ENCODE measurements at regions of chr11 and their contacts with region 1.

Region 1: DNA sequence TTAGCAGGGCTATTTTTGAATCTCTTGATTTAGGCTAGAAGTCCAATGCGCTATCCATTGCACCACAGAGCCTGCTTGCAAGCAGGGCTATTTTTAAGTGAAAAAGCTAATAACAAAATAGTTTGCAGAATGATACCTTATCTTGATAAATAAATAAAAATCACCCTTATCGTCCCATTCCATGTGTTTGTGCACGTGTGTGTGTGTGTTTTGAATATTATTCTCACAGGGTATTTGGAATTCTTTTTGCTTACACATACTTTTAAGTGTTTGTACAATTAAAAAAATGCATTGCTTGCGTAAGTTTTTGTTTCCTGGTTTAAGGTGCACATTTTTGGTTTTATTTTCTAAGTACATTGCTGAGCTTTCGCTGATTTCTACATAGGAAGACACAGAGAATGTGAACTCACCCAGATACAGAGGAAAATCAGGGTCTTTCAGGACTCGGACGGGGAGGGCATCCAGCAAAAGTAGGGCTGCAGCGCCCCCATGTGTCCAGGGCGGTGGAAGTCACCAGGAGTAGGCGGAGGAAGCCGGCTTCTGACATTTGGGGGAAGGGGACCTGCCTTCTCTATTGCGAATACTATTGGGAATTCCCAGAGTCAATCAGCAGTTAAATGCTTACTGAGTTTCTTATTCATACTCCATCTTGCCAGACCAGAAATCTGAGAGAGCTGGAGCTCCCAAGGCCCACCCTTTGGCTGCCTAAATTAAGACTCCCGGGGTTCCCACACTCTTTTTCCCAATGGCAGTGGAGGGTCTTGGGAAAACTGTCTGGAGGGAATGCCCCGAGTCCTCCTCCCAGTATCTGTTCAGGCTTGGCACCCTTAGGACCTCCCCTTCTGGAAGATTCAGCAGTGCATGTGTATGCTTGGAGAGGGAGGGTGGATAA is 27.2 kb downstream of the SLC1A2 start:
- DNase-seq: peak; percentile 70 to 93 (median 82)
- ATAC-seq: peak; percentile 93
- H3K4me3 ChIP-seq: no peak overlapping the region
- H3K4me3 Mint-ChIP-seq: peak overlapping the region; percentile 13 to 78 (median 63)
- H3K27ac ChIP-seq: no peak overlapping the region
- H3K27ac Mint-ChIP-seq: peak overlapping the region in 6 of 9 donors; percentile 25 to 86 (median 59)
- H3K4me1 ChIP-seq: peaks cover 0 to 17% of the 10 kb centered on the region in 2 donors
- H3K4me1 Mint-ChIP-seq: peaks cover 8 to 35% (median 30%) of the 10 kb centered on the region in 7 donors
- H3K27me3 ChIP-seq: no peaks in the 10 kb centered on the region
- H3K27me3 Mint-ChIP-seq: peaks cover 0 to 19% (median 0%) of the 10 kb centered on the region in 5 donors

Region 2: DNA sequence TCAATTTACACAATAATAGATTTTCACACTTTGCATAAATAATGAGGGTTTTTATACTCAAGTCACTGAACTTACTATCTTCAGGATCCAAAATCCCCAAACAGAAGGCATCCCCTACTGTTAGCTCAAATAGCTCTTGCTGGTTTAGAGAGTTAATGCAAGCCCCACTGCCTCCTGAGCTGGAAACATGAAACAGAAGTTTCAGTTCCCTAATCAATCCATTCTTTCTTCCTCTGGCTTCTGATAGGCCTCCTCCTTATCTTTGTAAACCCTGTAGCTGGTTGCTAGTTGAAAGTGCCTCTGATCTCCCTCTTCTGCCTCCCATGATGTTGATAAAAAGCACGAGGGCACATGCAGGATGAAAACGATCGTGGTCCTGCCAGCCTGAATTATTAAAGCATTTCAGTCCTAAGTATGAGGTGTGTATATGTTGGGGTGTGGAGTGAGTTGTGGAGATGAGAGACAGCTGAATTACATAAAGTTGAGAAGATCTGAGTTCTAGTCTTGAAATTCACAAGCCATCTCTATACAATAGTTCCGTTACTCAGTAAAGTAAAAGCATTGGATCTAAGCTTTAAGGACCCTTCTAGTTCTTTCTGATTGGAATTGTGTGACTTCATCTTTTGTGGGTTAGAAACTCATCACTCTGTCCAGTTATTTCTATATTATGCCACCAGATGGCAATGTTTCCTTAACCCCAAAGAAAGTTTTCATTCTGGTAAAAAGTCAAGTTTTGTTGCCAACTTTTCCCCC is 806.3 kb before region 1 on chr11:
- CTCF ChIA-PET with region 1: interaction called, 35 read pairs
- POLR2A ChIA-PET with region 1: no interaction called
- intact Hi-C with region 1: loop called (anchors 1 kb)
- DNase-seq: peak in 6 of 9 donors; percentile 5 to 47 (median 40)
- ATAC-seq: peak; percentile 60
- H3K4me3 ChIP-seq: no peak overlapping the region
- H3K4me3 Mint-ChIP-seq: no peak overlapping the region
- H3K27ac ChIP-seq: no peak overlapping the region
- H3K27ac Mint-ChIP-seq: no peak overlapping the region
- H3K4me1 ChIP-seq: peaks cover 0 to 4% of the 10 kb centered on the region in 2 donors
- H3K4me1 Mint-ChIP-seq: peaks cover 0 to 5% (median 0%) of the 10 kb centered on the region in 7 donors
- H3K27me3 ChIP-seq: no peaks in the 10 kb centered on the region
- H3K27me3 Mint-ChIP-seq: peaks cover 0 to 33% (median 18%) of the 10 kb centered on the region in 5 donors

Region 3: GRCh38 chr11:34926101-34926830 is 465.9 kb before region 1 on chr11:
- CTCF ChIA-PET with region 1: interaction called, 99 read pairs
- POLR2A ChIA-PET with region 1: interaction called, 5 read pairs
- intact Hi-C with region 1: loop called (anchors 1 kb)
- DNase-seq: peak in 7 of 9 donors; percentile 18 to 61 (median 58)
- ATAC-seq: peak; percentile 80
- H3K4me3 ChIP-seq: no peak overlapping the region
- H3K4me3 Mint-ChIP-seq: no peak overlapping the region
- H3K27ac ChIP-seq: no peak overlapping the region
- H3K27ac Mint-ChIP-seq: peak overlapping the region in 1 of 9 donors; percentile 49
- H3K4me1 ChIP-seq: peaks cover 0 to 10% of the 10 kb centered on the region in 2 donors
- H3K4me1 Mint-ChIP-seq: peaks cover 10 to 54% (median 29%) of the 10 kb centered on the region in 7 donors
- H3K27me3 ChIP-seq: no peaks in the 10 kb centered on the region
- H3K27me3 Mint-ChIP-seq: no peaks in the 10 kb centered on the region

Region 4: DNA sequence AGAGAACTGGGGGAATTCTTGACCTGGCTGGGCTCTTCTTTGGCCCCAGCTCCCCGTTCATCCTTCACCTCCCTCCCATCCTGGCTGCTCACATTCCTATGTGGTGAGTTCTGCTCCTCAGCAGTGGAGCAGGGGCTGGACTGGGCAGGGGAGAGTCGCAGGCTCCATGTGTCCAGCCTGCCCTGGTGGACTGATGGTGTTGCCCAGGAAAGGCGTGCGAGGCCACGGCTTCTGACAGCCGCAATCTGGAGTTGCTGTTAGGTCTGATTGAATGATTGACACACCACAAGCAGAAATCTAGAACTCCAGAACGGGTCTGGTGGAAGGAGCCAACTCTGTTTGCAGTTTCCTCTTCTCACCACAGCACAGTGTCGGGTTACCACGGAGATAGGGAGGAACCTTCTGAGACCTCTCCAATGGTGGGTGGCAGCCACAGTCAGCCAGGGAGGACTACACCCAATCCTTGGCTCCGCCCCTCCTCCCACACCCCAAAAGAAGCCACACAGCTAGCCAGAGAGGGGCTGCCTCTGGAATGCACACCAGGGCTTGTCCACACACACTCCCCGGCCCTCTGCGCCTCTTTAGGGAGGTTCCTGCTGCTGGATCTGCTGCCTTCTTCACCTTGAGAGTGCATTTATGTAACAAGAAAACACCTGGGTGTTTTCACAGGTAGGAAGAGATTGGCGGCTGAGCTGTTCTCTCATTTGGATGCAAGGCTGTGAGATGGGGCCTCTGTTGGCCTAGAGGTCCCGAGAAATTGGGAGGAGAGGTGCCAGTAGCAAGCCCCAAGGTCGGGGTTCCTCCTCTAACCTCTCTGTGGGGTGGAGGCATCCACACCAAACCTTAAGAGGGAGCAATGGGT is 309.6 kb before region 1 on chr11:
- CTCF ChIA-PET with region 1: no interaction called
- POLR2A ChIA-PET with region 1: no interaction called
- intact Hi-C with region 1: loop called in 1 of 2 experiments (anchors 5 kb)
- DNase-seq: peak; percentile 76 to 94 (median 92)
- ATAC-seq: peak; percentile 86
- H3K4me3 ChIP-seq: peak overlapping the region; percentile 55
- H3K4me3 Mint-ChIP-seq: peak overlapping the region; percentile 78 to 89 (median 86)
- H3K27ac ChIP-seq: peak overlapping the region; percentile 95
- H3K27ac Mint-ChIP-seq: peak overlapping the region; percentile 89 to 100 (median 99)
- H3K4me1 ChIP-seq: peaks cover 64 to 78% of the 10 kb centered on the region in 2 donors
- H3K4me1 Mint-ChIP-seq: peaks cover 61 to 100% (median 95%) of the 10 kb centered on the region in 7 donors
- H3K27me3 ChIP-seq: no peaks in the 10 kb centered on the region
- H3K27me3 Mint-ChIP-seq: no peaks in the 10 kb centered on the region

Region 5: DNA sequence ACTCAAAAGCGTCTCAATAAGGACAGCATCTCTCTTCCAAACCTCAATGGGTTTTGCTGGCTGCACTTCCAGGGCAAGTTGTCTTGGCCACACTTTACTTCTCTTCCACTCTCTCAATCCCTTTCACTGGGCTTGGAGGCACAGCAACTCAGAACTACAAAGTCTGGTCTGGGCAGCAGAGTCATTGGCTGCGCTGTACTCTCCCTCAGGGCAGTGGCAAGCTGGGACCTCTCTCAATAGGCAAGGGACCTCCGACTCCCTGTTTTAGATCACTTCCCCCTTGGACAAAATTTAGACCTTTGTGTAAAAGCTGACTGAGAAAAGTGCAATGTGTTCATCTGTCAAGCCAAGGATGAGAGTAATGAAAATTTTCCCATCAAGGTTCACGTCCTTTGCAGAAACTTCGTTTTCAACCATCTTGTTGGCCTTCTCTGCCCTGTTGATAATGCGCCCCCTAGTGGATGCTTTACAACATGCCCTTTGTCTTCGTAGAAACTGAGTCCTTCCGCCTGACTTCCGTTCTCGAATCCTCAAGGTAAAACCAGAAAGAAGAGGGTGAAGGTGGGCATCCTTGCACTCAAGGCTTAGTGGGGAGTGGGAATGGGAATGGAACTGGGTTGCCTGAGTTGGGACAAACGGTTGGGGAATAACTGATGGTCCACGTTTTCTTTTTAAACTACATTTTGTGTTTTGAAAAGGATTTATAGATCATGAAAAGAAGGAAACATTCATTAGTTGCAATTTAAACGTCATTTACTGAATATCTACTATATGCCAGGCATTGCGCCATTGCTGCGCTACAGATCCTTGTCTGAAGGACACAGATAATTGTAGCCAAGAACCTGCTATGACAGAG is 154.1 kb before region 1 on chr11:
- CTCF ChIA-PET with region 1: interaction called, 6 read pairs
- POLR2A ChIA-PET with region 1: no interaction called
- intact Hi-C with region 1: loop called (anchors 2 kb)
- DNase-seq: peak in 7 of 9 donors; percentile 28 to 69 (median 47)
- ATAC-seq: peak; percentile 46
- H3K4me3 ChIP-seq: no peak overlapping the region
- H3K4me3 Mint-ChIP-seq: peak overlapping the region in 5 of 10 donors; percentile 20 to 74 (median 61)
- H3K27ac ChIP-seq: no peak overlapping the region
- H3K27ac Mint-ChIP-seq: peak overlapping the region; percentile 39 to 90 (median 73)
- H3K4me1 ChIP-seq: peaks cover 40 to 46% of the 10 kb centered on the region in 2 donors
- H3K4me1 Mint-ChIP-seq: peaks cover 51 to 94% (median 80%) of the 10 kb centered on the region in 7 donors
- H3K27me3 ChIP-seq: no peaks in the 10 kb centered on the region
- H3K27me3 Mint-ChIP-seq: peaks cover 0 to 9% (median 0%) of the 10 kb centered on the region in 5 donors

Region 6: GRCh38 chr11:35330931-35331330 is 61.2 kb before region 1 on chr11:
- CTCF ChIA-PET with region 1: interaction called, 3 read pairs
- POLR2A ChIA-PET with region 1: interaction called, 3 read pairs
- intact Hi-C with region 1: loop called in 1 of 2 experiments (anchors 1 kb)
- DNase-seq: peak in 8 of 9 donors; percentile 39 to 78 (median 68)
- ATAC-seq: peak; percentile 91
- H3K4me3 ChIP-seq: no peak overlapping the region
- H3K4me3 Mint-ChIP-seq: peak overlapping the region in 9 of 10 donors; percentile 2 to 68 (median 61)
- H3K27ac ChIP-seq: peak overlapping the region; percentile 69
- H3K27ac Mint-ChIP-seq: peak overlapping the region; percentile 88 to 98 (median 90)
- H3K4me1 ChIP-seq: peaks cover 37 to 51% of the 10 kb centered on the region in 2 donors
- H3K4me1 Mint-ChIP-seq: peaks cover 36 to 76% (median 67%) of the 10 kb centered on the region in 7 donors
- H3K27me3 ChIP-seq: no peaks in the 10 kb centered on the region
- H3K27me3 Mint-ChIP-seq: no peaks in the 10 kb centered on the region

Region 7: GRCh38 chr11:35485656-35486322 is 93.6 kb after region 1 on chr11:
- CTCF ChIA-PET with region 1: no interaction called
- POLR2A ChIA-PET with region 1: no interaction called
- intact Hi-C with region 1: loop called (anchors 1 to 5 kb)
- DNase-seq: peak; percentile 35 to 71 (median 52)
- ATAC-seq: peak; percentile 84
- H3K4me3 ChIP-seq: no peak overlapping the region
- H3K4me3 Mint-ChIP-seq: no peak overlapping the region
- H3K27ac ChIP-seq: no peak overlapping the region
- H3K27ac Mint-ChIP-seq: no peak overlapping the region
- H3K4me1 ChIP-seq: no peaks in the 10 kb centered on the region
- H3K4me1 Mint-ChIP-seq: peaks cover 0 to 3% (median 0%) of the 10 kb centered on the region in 7 donors
- H3K27me3 ChIP-seq: no peaks in the 10 kb centered on the region
- H3K27me3 Mint-ChIP-seq: peaks cover 30 to 52% (median 48%) of the 10 kb centered on the region in 5 donors

Measured in naive thymus-derived CD4-positive, alpha-beta T cell (primary cell).